ENCODE measurements at regions of chr7 and their contacts with region 1.

Region 1: GRCh38 chr7:138459413-138460175 is 465 bp upstream of the TRIM24 start:
- DNase-seq: peak; percentile 98 to 99 (median 98)
- H3K4me3 ChIP-seq: peak overlapping the region in 1 of 2 donors; percentile 49
- H3K4me3 Mint-ChIP-seq: peak overlapping the region; percentile 73 to 94 (median 84)
- H3K27ac ChIP-seq: peak overlapping the region; percentile 2
- H3K27ac Mint-ChIP-seq: peak overlapping the region; percentile 58 to 95 (median 85)
- H3K4me1 ChIP-seq: peaks cover 15% of the 10 kb centered on the region
- H3K4me1 Mint-ChIP-seq: peaks cover 15 to 30% (median 23%) of the 10 kb centered on the region in 4 donors
- H3K27me3 ChIP-seq: no peaks in the 10 kb centered on the region
- H3K27me3 Mint-ChIP-seq: peaks cover 0 to 3% of the 10 kb centered on the region in 2 donors

Region 2: GRCh38 chr7:138575897-138576428 is 116.4 kb after region 1 on chr7:
- CTCF ChIA-PET with region 1: no interaction called
- POLR2A ChIA-PET with region 1: no interaction called
- intact Hi-C with region 1: loop called (anchors 10 kb)
- DNase-seq: no peak
- H3K4me3 ChIP-seq: no peak overlapping the region
- H3K4me3 Mint-ChIP-seq: no peak overlapping the region
- H3K27ac ChIP-seq: no peak overlapping the region
- H3K27ac Mint-ChIP-seq: peak overlapping the region in 2 of 7 donors; percentile 6 to 40
- H3K4me1 ChIP-seq: no peaks in the 10 kb centered on the region
- H3K4me1 Mint-ChIP-seq: peaks cover 0 to 6% (median 3%) of the 10 kb centered on the region in 4 donors
- H3K27me3 ChIP-seq: no peaks in the 10 kb centered on the region
- H3K27me3 Mint-ChIP-seq: no peaks in the 10 kb centered on the region

Region 3: GRCh38 chr7:138875794-138876193 is 416.2 kb after region 1 on chr7:
- CTCF ChIA-PET with region 1: no interaction called
- POLR2A ChIA-PET with region 1: no interaction called
- intact Hi-C with region 1: loop called (anchors 5 kb)
- DNase-seq: peak; percentile 76 to 85 (median 80)
- H3K4me3 ChIP-seq: no peak overlapping the region
- H3K4me3 Mint-ChIP-seq: peak overlapping the region in 3 of 8 donors; percentile 6 to 67 (median 17)
- H3K27ac ChIP-seq: no peak overlapping the region
- H3K27ac Mint-ChIP-seq: peak overlapping the region; percentile 62 to 93 (median 82)
- H3K4me1 ChIP-seq: peaks cover 16% of the 10 kb centered on the region
- H3K4me1 Mint-ChIP-seq: peaks cover 10 to 19% (median 14%) of the 10 kb centered on the region in 4 donors
- H3K27me3 ChIP-seq: no peaks in the 10 kb centered on the region
- H3K27me3 Mint-ChIP-seq: peaks cover 0 to 2% of the 10 kb centered on the region in 2 donors

Measured in CD4-positive, alpha-beta memory T cell (primary cell).